ENCODE measurements at regions of chr10 and their contacts with region 1.

Region 1: GRCh38 chr10:69348816-69349541 is 67.7 kb downstream of the TACR2 start:
- DNase-seq: peak in 3 of 14 experiments; percentile 31 to 47 (median 31)
- ATAC-seq: peak; percentile 11
- H3K4me3 ChIP-seq: no peak overlapping the region
- H3K4me3 Mint-ChIP-seq: peak overlapping the region; percentile 77
- H3K27ac ChIP-seq: peak overlapping the region; percentile 48 to 53
- H3K27ac Mint-ChIP-seq: peak overlapping the region; percentile 90
- H3K4me1 ChIP-seq: peaks cover 74% of the 10 kb centered on the region
- H3K4me1 Mint-ChIP-seq: peaks cover 84% of the 10 kb centered on the region
- H3K27me3 ChIP-seq: no peaks in the 10 kb centered on the region
- H3K27me3 Mint-ChIP-seq: no peaks in the 10 kb centered on the region
- CTCF ChIP-seq: no peak

Region 2: GRCh38 chr10:69327463-69328379 is 21.3 kb before region 1 on chr10:
- CTCF ChIA-PET with region 1: interaction called, 3 read pairs
- POLR2A ChIA-PET with region 1: interaction called, 9 read pairs
- intact Hi-C with region 1: loop called (anchors 2 kb)
- DNase-seq: peak in 12 of 14 experiments; percentile 16 to 70 (median 46)
- ATAC-seq: peak; percentile 80
- H3K4me3 ChIP-seq: peak overlapping the region; percentile 43
- H3K4me3 Mint-ChIP-seq: peak overlapping the region; percentile 86
- H3K27ac ChIP-seq: peak overlapping the region; percentile 29 to 53
- H3K27ac Mint-ChIP-seq: peak overlapping the region; percentile 87
- H3K4me1 ChIP-seq: peaks cover 47% of the 10 kb centered on the region
- H3K4me1 Mint-ChIP-seq: peaks cover 88% of the 10 kb centered on the region
- H3K27me3 ChIP-seq: no peaks in the 10 kb centered on the region
- H3K27me3 Mint-ChIP-seq: no peaks in the 10 kb centered on the region
- CTCF ChIP-seq: no peak

Region 3: DNA sequence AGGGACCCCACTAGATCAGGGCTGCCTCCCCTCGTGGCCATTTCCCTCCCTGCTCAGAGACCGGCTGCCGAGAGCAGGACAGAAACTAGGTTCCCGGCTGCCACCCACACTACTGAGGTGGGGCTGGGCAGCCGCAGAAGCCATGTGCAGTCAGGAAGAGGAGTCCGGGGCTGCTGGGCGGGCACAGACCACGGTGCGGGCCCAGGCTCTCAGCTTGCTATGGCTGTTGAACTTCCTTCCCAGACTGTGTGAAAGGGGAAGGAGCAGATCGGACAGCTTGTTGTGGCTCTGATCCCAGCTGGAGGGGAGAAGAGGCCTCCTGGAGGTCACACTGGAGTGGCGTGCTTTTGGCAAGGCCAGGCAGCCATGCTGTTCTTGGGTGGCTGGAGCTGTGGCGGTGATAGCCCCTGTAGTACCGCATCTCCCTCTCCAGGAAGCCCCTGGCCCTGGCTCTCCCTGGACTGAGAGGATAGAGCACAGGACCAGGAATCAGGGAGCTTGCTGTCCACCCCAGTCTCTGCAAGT is 13.9 kb before region 1 on chr10:
- CTCF ChIA-PET with region 1: interaction called, 4 read pairs
- POLR2A ChIA-PET with region 1: interaction called, 5 read pairs
- intact Hi-C with region 1: loop called in 1 of 2 experiments (anchors 2 kb)
- DNase-seq: peak in 5 of 14 experiments; percentile 25 to 55 (median 51)
- ATAC-seq: peak; percentile 82
- H3K4me3 ChIP-seq: peak overlapping the region; percentile 5
- H3K4me3 Mint-ChIP-seq: peak overlapping the region; percentile 74
- H3K27ac ChIP-seq: peak overlapping the region in 1 of 2 donors; percentile 38
- H3K27ac Mint-ChIP-seq: peak overlapping the region; percentile 85
- H3K4me1 ChIP-seq: peaks cover 67% of the 10 kb centered on the region
- H3K4me1 Mint-ChIP-seq: peaks cover 83% of the 10 kb centered on the region
- H3K27me3 ChIP-seq: no peaks in the 10 kb centered on the region
- H3K27me3 Mint-ChIP-seq: no peaks in the 10 kb centered on the region
- CTCF ChIP-seq: no peak

Region 4: GRCh38 chr10:69360485-69361324 is 11.7 kb after region 1 on chr10:
- CTCF ChIA-PET with region 1: interaction called, 4 read pairs
- POLR2A ChIA-PET with region 1: interaction called, 18 read pairs
- intact Hi-C with region 1: loop called in 1 of 2 experiments (anchors 1 kb)
- DNase-seq: no peak
- ATAC-seq: no peak
- H3K4me3 ChIP-seq: peak overlapping the region; percentile 33
- H3K4me3 Mint-ChIP-seq: peak overlapping the region; percentile 79
- H3K27ac ChIP-seq: peak overlapping the region; percentile 33 to 55
- H3K27ac Mint-ChIP-seq: peak overlapping the region; percentile 94
- H3K4me1 ChIP-seq: peaks cover 52% of the 10 kb centered on the region
- H3K4me1 Mint-ChIP-seq: peaks cover 77% of the 10 kb centered on the region
- H3K27me3 ChIP-seq: no peaks in the 10 kb centered on the region
- H3K27me3 Mint-ChIP-seq: no peaks in the 10 kb centered on the region
- CTCF ChIP-seq: no peak

Region 5: GRCh38 chr10:69464801-69465401 is 115.9 kb after region 1 on chr10:
- CTCF ChIA-PET with region 1: no interaction called
- POLR2A ChIA-PET with region 1: no interaction called
- intact Hi-C with region 1: no loop called
- DNase-seq: peak in 2 of 14 experiments; percentile 18 to 54
- ATAC-seq: no peak
- H3K4me3 ChIP-seq: no peak overlapping the region
- H3K4me3 Mint-ChIP-seq: no peak overlapping the region
- H3K27ac ChIP-seq: peak overlapping the region in 1 of 2 donors; percentile 60
- H3K27ac Mint-ChIP-seq: no peak overlapping the region
- H3K4me1 ChIP-seq: peaks cover 55% of the 10 kb centered on the region
- H3K4me1 Mint-ChIP-seq: peaks cover 11% of the 10 kb centered on the region
- H3K27me3 ChIP-seq: no peaks in the 10 kb centered on the region
- H3K27me3 Mint-ChIP-seq: no peaks in the 10 kb centered on the region
- CTCF ChIP-seq: no peak

Region 6: GRCh38 chr10:69516316-69516715 is 167.3 kb after region 1 on chr10:
- CTCF ChIA-PET with region 1: no interaction called
- POLR2A ChIA-PET with region 1: no interaction called
- intact Hi-C with region 1: no loop called
- DNase-seq: peak in 6 of 14 experiments; percentile 16 to 57 (median 28)
- ATAC-seq: peak; percentile 62
- H3K4me3 ChIP-seq: no peak overlapping the region
- H3K4me3 Mint-ChIP-seq: no peak overlapping the region
- H3K27ac ChIP-seq: no peak overlapping the region
- H3K27ac Mint-ChIP-seq: no peak overlapping the region
- H3K4me1 ChIP-seq: no peaks in the 10 kb centered on the region
- H3K4me1 Mint-ChIP-seq: no peaks in the 10 kb centered on the region
- H3K27me3 ChIP-seq: no peaks in the 10 kb centered on the region
- H3K27me3 Mint-ChIP-seq: peaks cover 36% of the 10 kb centered on the region
- CTCF ChIP-seq: no peak

Region 7: DNA sequence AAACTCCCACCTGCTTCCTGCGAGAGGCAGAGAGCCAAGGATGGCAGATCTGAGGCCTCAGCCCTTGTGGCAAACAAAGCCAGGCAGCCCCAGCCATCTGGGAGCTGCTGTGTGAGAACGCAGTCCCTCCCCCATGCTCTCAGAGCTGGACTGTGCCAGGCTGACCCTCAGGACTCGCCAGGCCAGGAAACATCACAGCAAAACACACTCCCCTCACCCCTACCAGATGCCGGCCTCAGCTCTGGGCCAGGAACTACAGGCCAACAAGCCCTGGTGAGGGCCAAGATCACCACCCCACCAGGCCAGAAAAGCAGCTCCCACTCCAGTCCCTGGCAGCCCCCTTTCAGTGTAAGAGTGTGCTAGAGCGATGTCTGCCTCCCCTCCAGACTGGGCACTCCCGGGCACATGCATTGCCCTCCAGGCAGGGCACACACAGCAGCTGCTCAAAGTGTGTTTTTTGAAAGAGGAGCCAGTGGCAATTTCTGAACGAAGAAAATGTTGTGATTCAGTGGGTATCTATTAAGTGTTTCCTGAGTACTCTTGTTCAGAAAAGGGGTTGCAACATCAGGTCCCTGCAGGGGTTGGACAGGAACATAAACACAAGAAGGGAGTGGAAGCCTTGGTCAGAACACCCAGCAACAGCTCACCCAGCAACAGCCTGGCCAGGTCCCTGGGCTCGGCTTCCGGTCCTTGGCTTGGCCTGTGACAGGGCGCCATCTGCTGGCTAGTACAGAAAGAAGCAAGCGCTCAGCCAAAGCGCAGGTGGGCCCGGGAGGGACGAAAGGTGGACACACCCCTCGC is 1015.2 kb after region 1 on chr10:
- CTCF ChIA-PET with region 1: no interaction called
- POLR2A ChIA-PET with region 1: no interaction called
- intact Hi-C with region 1: no loop called
- DNase-seq: peak; percentile 72 to 91 (median 78)
- ATAC-seq: peak; percentile 98
- H3K4me3 ChIP-seq: no peak overlapping the region
- H3K4me3 Mint-ChIP-seq: no peak overlapping the region
- H3K27ac ChIP-seq: no peak overlapping the region
- H3K27ac Mint-ChIP-seq: no peak overlapping the region
- H3K4me1 ChIP-seq: peaks cover 13% of the 10 kb centered on the region
- H3K4me1 Mint-ChIP-seq: peaks cover 9% of the 10 kb centered on the region
- H3K27me3 ChIP-seq: no peaks in the 10 kb centered on the region
- H3K27me3 Mint-ChIP-seq: no peaks in the 10 kb centered on the region
- CTCF ChIP-seq: peak; percentile 89

Measured in CD4-positive, alpha-beta T cell (primary cell).